ENCODE measurements at regions of chr5 and their contacts with region 1.

Region 1: DNA sequence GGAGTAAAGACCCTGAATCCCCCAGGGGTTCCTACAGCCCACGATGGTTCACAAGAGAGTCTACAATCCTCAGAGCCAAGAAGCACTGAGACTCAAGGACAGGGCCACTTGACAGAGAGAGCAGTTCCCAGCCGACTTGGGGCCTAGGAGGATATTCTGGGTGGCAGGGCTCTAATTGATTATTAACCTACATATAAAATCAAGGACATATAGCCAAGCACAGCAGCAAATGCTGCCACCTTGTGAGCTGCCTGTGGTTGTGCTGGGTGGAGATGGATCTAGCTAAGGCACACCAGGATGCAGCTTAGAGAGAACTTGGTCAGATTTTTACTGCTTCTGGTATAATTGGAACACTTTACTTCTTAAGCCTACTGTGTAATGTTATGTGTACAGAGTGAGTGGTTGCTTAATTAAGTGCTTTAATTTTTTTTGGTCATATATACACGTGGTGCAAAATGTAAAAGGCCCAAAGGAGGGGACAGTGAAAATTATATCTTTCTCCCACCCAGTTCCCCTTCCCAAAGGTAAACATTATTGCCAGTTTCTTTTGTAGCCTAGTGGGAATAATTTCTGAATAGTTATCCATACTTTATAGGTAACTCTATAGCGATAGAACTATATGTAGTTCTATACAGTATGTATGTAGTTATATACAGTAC is 78.8 kb downstream of the F2RL2 start:
- DNase-seq: peak in 5 of 6 donors; percentile 62 to 82 (median 74)
- ATAC-seq: peak; percentile 84 to 87 (median 84)
- H3K4me3 ChIP-seq: no peak overlapping the region
- H3K27ac ChIP-seq: peak overlapping the region in 3 of 4 donors; percentile 46 to 65 (median 59)
- H3K4me1 ChIP-seq: peaks cover 34 to 50% (median 39%) of the 10 kb centered on the region in 3 donors
- H3K27me3 ChIP-seq: no peaks in the 10 kb centered on the region
- CTCF ChIP-seq: peak; percentile 15 to 78 (median 56)

Region 2: DNA sequence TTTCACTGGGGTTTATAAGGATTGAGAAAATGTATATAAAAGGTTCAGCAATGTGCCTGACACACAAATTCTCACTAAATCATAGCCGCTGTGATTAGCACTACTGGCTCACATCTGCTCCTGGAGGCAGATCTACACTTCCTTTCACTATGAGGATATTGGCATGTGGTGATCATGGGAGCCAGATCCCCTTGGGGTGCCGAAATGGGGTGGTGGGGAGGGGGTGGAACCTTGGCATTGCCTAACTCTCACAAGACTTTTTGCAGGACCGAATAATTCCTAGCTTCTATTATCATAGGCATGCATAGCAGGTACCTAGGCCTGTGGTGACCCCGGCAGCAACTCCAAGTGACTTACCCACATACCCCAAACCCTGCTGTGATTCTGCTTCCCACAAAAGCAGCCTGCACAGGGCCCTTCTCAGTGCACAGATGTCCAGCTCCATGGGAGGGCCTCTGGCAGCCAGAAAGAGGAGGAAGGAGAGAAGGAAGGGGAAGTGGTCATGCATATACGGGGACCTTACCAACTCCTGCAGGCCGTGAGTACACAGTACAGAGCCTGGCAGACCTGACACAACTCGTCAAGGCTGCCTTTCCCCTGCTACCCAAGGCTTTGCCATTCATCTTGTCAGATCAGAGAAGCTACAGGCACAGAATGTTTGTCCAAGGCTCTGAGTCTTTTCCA is 202.6 kb before region 1 on chr5:
- intact Hi-C with region 1: loop called in 1 of 3 experiments (anchors 10 kb)
- DNase-seq: peak in 3 of 6 donors; percentile 11 to 35 (median 21)
- ATAC-seq: peak in 3 of 4 donors; percentile 38 to 63 (median 43)
- H3K4me3 ChIP-seq: no peak overlapping the region
- H3K27ac ChIP-seq: peak overlapping the region in 1 of 4 donors; percentile 11
- H3K4me1 ChIP-seq: peaks cover 0 to 8% (median 4%) of the 10 kb centered on the region in 3 donors
- H3K27me3 ChIP-seq: no peaks in the 10 kb centered on the region
- CTCF ChIP-seq: no peak